HEK293 (cell line): ENCODE measurements at regions of chr9 and their contacts with region 1.

Region 1: DNA sequence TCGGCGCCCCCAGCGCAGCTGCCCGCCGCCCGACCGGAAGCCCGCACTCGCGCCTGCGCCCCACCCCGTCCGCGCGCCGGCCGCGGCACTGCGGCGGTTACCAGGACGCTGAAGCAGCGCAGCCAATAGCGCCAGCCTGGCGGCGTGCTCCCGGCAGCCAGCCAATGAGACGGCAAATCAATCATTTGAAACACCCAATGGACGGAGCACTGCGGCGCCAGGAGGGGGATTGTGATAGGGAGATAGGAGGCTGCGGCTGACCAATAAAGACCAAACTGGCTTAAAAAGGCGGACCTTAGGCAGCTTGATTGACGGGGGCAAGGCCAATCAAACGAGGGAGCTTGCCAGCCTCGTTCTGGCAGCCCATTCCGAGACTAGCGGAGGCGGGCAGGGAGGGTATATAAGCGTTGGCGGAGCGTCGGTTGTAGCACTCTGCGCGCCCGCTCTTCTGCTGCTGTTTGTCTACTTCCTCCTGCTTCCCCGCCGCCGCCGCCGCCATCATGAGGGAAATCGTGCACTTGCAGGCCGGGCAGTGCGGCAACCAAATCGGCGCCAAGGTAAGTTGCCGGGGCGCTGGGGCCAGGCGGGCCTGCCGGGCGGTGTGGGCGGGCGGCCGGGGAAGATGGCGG is at the start of gene TUBB4B:
- H3K4me3 ChIP-seq: peak within 1 kb of the TSS; percentile 83
- H3K27ac ChIP-seq: peak within 1 kb of the TSS; percentile 93
- H3K4me1 ChIP-seq: peaks cover 6% of the 10 kb centered on the region; the same call in 1 of the 2 replicates
- CTCF ChIP-seq: no peak

Region 2: DNA sequence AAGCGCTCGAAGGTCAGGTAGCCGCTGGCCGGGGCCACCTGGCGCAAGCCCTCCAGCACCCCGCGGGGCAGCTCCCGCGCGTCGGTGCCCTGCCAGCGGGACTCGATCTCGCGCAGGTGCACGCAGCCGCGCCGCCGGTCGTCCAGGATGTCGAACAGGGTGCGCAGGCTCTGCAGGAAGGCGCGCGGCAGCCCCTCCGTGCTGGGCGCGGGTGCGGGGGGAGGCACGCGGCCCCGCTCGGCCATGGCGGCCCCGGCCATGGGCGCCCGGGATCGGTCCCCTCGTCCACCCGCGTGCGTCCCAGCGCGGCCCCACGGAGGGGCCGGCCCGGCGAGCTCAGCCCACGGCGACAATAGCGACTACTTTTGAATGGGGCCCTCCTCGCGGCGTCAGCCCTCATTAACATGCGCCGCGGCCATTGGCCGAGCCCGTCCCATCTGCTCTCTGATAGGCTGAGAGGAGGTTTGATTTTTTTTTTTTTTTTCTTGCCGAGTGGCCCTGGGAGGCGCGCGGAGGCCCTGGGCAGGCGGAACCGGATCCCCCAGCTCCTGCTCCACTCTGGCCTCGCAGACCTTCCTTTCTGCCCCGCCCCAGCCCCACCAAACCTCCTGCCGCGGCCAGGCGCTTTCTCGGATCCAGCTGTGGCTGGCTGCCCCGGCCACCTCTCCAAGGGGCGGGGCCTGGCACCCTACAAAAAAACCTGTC is 170.6 kb before region 1 on chr9 and contains the start of gene SAPCD2:
- CTCF ChIA-PET with region 1: interaction called, 7 read pairs
- POLR2A ChIA-PET with region 1: interaction called, 18 read pairs
- H3K4me3 ChIP-seq: peak within 1 kb of the TSS; percentile 38
- H3K27ac ChIP-seq: peak within 1 kb of the TSS; percentile 71
- H3K4me1 ChIP-seq: peaks cover 10% of the 10 kb centered on the region; the same call in 1 of the 2 replicates
- CTCF ChIP-seq: no peak

Region 3: GRCh38 chr9:137150617-137151457 is 90.1 kb before region 1 on chr9:
- CTCF ChIA-PET with region 1: interaction called, 3 read pairs
- POLR2A ChIA-PET with region 1: interaction called, 20 read pairs
- H3K4me3 ChIP-seq: no peak overlapping the region
- H3K27ac ChIP-seq: no peak overlapping the region
- H3K4me1 ChIP-seq: no peaks in the 10 kb centered on the region
- CTCF ChIP-seq: no peak

Region 4: DNA sequence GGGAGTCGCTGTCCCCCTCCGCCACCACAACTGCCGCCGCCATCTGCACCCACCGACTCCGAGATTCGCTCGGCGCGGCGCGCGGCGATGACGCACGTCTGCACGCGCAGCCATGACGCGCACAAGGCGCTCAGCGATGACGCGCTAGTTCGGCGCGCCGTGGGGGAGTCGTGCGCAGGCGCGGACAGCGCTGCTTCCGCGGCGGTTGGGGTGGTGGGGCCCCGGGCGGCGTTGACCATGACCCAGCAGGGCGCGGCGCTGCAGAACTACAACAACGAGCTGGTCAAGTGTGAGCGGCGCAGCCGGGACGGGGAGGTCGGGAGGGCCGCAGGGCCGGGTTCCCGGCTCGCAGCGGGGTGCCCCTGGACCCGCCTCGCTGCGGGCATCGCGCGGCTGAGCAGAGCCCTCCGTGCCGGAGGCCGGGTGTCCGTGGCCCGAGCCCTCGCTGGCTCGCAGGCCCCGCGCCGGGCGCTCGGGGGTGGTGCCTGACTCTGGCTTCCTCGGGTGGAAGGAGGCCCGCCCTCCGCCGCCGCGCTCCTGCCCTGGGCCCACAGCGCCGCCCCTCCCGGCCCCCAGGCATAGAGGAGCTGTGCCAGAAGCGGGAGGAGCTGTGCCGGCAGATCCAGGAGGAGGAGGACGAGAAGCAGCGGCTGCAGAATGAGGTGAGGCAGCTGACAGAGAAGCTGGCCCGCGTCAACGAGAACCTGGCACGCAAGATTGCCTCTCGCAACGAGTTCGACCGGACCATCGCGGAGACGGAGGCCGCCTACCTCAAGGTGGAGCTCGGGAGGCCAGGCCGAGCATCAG is 52.3 kb before region 1 on chr9 and contains the starts of genes ANAPC2 and SSNA1:
- CTCF ChIA-PET with region 1: interaction called, 16 read pairs
- POLR2A ChIA-PET with region 1: interaction called, 28 read pairs
- H3K4me3 ChIP-seq: peak within 1 kb of the TSS; percentile 92
- H3K27ac ChIP-seq: peak within 1 kb of the TSS; percentile 92
- H3K4me1 ChIP-seq: peaks cover 11% of the 10 kb centered on the region
- CTCF ChIP-seq: peak; percentile 100

Region 5: DNA sequence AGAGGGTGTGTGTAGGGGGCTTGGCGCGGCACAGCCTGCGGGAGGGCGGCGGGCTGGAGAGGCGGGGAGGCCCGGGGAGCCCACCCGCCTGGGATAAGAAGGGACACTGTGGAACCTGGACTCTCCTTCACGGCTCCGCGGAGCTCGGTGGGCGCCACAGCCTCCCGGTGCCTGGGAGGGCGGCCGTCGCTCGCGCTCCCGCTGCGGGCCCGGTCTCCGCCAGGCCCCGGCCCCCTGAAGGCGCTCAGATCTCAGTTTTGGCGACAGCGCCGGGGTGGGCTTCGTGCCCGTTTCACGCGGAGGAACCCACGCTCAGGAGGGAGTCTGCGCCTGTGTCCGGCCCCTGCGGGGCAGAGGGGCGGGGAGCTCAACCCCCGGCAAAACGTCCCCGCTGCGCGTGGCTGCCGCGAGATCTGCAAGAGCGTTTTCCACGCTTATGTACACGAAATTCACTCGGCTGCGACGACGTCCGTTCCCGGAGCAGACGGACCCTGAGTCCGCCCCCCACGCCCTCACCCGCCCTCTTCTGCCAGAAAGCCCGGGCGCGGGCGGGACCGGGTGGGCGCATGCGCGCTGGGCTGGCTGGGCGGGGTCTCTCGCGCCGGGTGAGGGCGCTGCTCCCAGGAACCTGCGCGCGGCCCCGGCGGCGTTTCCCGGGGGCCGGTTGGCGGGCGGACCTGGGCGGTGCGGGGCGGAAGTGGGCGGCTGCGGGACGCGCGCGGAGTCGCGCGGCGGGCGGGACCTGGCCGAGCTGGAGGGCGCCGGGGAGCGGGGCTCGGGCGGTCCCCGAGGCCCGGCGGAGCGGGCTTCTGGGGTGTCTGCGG is 13.9 kb after region 1 on chr9 and contains the start of gene NELFB:
- CTCF ChIA-PET with region 1: interaction called, 45 read pairs
- POLR2A ChIA-PET with region 1: interaction called, 336 read pairs
- H3K4me3 ChIP-seq: peak within 1 kb of the TSS; percentile 89
- H3K27ac ChIP-seq: peak within 1 kb of the TSS; percentile 81
- H3K4me1 ChIP-seq: peaks cover 5% of the 10 kb centered on the region; the same call in 1 of the 2 replicates
- CTCF ChIP-seq: peak; percentile 45; the same call in 1 of the 2 replicates

Region 6: GRCh38 chr9:137286975-137287383 is 46.0 kb after region 1 on chr9:
- CTCF ChIA-PET with region 1: interaction called, 10 read pairs
- POLR2A ChIA-PET with region 1: interaction called, 6 read pairs
- H3K4me3 ChIP-seq: no peak overlapping the region
- H3K27ac ChIP-seq: no peak overlapping the region
- H3K4me1 ChIP-seq: no peaks in the 10 kb centered on the region
- CTCF ChIP-seq: peak; percentile 92

Region 7: DNA sequence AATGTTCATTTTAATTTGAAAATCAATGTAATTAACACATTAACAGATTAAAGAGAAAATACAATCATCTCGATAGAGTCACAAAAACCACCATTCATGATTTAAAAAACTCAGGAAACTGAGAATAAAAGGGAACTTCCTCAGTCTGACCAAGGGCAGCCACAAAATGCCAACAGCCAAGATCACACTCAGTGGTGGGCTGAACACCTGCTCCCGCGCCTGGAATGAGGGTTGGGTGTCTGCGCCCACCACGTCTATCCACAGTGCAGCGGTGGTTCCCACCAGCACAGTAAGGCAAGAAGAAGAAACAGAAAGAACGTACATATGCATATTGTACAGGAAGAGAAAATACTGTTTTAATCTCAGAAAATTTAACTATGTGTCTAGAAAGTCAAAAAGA is 229.8 kb after region 1 on chr9:
- CTCF ChIA-PET with region 1: no interaction called
- POLR2A ChIA-PET with region 1: no interaction called
- H3K4me3 ChIP-seq: no peak overlapping the region
- H3K27ac ChIP-seq: no peak overlapping the region
- H3K4me1 ChIP-seq: no peaks in the 10 kb centered on the region
- CTCF ChIP-seq: no peak